Adrenal gland (tissue), 19 donors: ENCODE measurements at regions of chr5 and their contacts with region 1.

Region 1: DNA sequence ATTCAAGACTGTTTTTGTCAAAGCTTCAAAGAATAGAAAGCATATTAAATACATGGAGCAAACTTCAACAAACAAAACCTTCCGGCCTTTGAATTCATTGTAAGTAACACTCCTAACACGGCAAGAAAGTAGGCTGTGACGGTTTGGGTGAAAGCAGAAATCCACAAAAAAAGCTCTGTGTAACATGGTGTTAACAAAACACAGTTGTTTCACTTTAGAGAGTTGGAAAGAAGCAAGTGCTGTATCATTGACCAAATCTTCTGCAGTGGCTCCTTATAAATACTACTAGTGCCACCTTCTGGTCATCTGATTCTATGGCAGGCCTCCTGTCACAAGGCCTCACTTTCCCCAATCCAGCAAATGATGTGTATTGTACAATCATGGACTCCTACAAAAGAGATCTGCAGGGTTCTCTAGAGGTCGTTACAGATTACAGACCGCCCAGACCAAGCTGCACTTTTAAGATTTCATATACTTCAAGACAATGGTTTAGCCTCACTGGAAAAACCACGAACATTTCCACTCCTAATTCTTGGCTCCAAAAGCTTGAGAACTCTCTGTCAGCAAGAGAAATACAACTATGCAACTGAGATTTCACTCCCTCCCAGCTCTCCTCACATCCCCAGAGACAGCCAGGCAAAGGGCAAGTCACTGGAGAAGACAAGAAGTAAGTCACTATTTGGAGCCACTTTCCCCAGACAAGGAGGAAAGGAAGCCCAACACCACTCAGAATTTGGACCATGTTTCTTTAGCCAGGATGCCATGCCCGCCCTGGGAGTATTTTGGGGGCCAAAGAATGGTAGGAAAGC is 196.2 kb downstream of the DTWD2 start:
- DNase-seq: peak; percentile 30 to 75 (median 54)
- H3K4me3 ChIP-seq: peak overlapping the region in 1 of 4 donors; percentile 27
- H3K27ac ChIP-seq: peak overlapping the region in 3 of 5 donors; percentile 7 to 50 (median 48)
- H3K4me1 ChIP-seq: no peaks in the 10 kb centered on the region
- H3K27me3 ChIP-seq: no peaks in the 10 kb centered on the region
- CTCF ChIP-seq: peak; percentile 63 to 79 (median 68)
- POLR2A ChIP-seq: no peak

Region 2: GRCh38 chr5:117454716-117455596 is 1337.2 kb before region 1 on chr5:
- intact Hi-C with region 1: loop called in 1 of 2 experiments (anchors 10 kb)
- DNase-seq: peak; percentile 12 to 80 (median 39)
- H3K4me3 ChIP-seq: no peak overlapping the region
- H3K27ac ChIP-seq: no peak overlapping the region
- H3K4me1 ChIP-seq: no peaks in the 10 kb centered on the region
- H3K27me3 ChIP-seq: no peaks in the 10 kb centered on the region
- CTCF ChIP-seq: peak; percentile 45 to 77 (median 66)
- POLR2A ChIP-seq: no peak